ENCODE measurements at regions of chr9 and their contacts with region 1.

Region 1: GRCh38 chr9:136665111-136665703 is 2.5 kb downstream of the EGFL7 start:
- DNase-seq: no peak
- H3K4me3 ChIP-seq: peak overlapping the region; percentile 43 to 52
- H3K27ac ChIP-seq: peak overlapping the region; percentile 39
- H3K4me1 ChIP-seq: peaks cover 13% of the 10 kb centered on the region
- H3K27me3 ChIP-seq: peaks cover 4% of the 10 kb centered on the region
- CTCF ChIP-seq: no peak
- POLR2A ChIP-seq: no peak

Region 2: DNA sequence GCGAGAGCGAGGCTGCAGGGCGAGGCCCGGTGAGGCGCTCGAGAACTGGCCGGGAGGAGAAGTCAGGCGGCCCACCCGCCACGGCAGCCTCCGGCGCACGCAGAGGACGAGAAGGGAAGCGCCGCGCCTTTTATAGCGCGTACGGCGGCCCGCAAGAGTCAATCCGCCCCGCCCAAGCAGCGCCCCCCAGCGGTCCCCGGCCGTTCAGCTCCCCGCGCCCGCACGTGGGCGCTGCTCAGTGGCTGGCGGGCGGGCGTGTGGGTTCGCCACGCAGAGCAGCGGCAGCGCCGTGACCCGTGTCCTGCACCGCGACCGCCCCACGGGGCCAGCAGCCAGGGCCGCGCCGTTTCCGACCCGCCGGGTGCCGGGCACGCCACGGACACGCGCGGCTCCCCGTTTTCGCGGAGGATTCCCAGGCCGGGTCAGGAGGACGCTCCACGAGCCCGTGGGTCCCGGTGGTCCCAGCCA is 62.9 kb after region 1 on chr9:
- intact Hi-C with region 1: loop called (anchors 5 kb)
- DNase-seq: no peak
- H3K4me3 ChIP-seq: peak overlapping the region; percentile 76 to 87
- H3K27ac ChIP-seq: peak overlapping the region; percentile 62
- H3K4me1 ChIP-seq: peaks cover 50% of the 10 kb centered on the region
- H3K27me3 ChIP-seq: no peaks in the 10 kb centered on the region
- CTCF ChIP-seq: peak; percentile 53 to 95 (median 94)
- POLR2A ChIP-seq: peak; percentile 29 to 92

Measured in vagina (tissue), 2 donors.